PC-3 (cell line): ENCODE measurements at regions of chr3 and their contacts with region 1.

Region 1: GRCh38 chr3:55521738-55522421 is 34.8 kb upstream of the WNT5A start:
- DNase-seq: no peak
- ATAC-seq: no peak
- H3K4me3 ChIP-seq: no peak overlapping the region
- H3K27ac ChIP-seq: no peak overlapping the region
- H3K4me1 ChIP-seq: peaks cover 59% of the 10 kb centered on the region
- H3K27me3 ChIP-seq: no peaks in the 10 kb centered on the region
- CTCF ChIP-seq: no peak

Region 2: DNA sequence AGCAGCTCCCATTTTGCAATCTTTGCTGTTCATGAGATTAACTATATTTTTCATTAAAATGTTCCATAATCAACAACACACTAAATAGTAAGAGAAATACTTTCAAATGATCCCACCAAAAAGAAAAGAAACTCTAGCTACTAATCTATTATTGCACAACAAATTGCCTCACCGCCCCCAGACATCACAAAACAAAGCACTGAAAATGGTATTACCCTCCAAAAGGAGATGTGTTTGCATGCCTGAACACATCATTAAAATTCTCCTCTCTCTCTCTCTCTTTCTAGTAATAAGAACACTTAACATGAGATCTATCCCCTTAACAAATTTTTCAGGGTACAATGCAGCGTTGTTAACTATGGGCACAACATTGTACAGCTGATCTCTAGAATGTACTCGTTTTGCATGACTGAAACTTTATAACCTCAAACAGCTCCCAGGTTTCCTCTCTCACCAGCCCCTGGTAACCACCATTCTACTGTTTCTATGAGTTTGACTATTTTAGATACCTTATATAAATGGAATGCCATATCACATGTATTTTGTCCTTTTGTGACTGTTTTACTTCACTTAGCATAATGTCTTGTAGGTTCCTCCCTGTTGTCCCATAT is 67.9 kb before region 1 on chr3:
- CTCF ChIA-PET with region 1: no interaction called
- POLR2A ChIA-PET with region 1: no interaction called
- intact Hi-C with region 1: loop called (anchors 1 kb)
- DNase-seq: no peak
- ATAC-seq: no peak
- H3K4me3 ChIP-seq: no peak overlapping the region
- H3K27ac ChIP-seq: no peak overlapping the region
- H3K4me1 ChIP-seq: peaks cover 7% of the 10 kb centered on the region; the same call in 1 of the 2 replicates
- H3K27me3 ChIP-seq: no peaks in the 10 kb centered on the region
- CTCF ChIP-seq: no peak

Region 3: GRCh38 chr3:55491296-55491816 is 30.5 kb before region 1 on chr3:
- CTCF ChIA-PET with region 1: no interaction called
- POLR2A ChIA-PET with region 1: no interaction called
- intact Hi-C with region 1: loop called (anchors 1 kb)
- DNase-seq: peak; percentile 99
- ATAC-seq: peak; percentile 25
- H3K4me3 ChIP-seq: no peak overlapping the region; the same call in 1 of the 2 replicates
- H3K27ac ChIP-seq: peak overlapping the region; percentile 65
- H3K4me1 ChIP-seq: peaks cover 47% of the 10 kb centered on the region
- H3K27me3 ChIP-seq: no peaks in the 10 kb centered on the region
- CTCF ChIP-seq: no peak

Region 4: GRCh38 chr3:55543181-55543614 is 21.3 kb after region 1 on chr3:
- CTCF ChIA-PET with region 1: no interaction called
- POLR2A ChIA-PET with region 1: interaction called, 13 read pairs
- intact Hi-C with region 1: no loop called
- DNase-seq: no peak
- ATAC-seq: no peak
- H3K4me3 ChIP-seq: no peak overlapping the region
- H3K27ac ChIP-seq: no peak overlapping the region
- H3K4me1 ChIP-seq: peaks cover 5% of the 10 kb centered on the region; the same call in 1 of the 2 replicates
- H3K27me3 ChIP-seq: no peaks in the 10 kb centered on the region
- CTCF ChIP-seq: no peak

Region 5: GRCh38 chr3:55597638-55598037 is 75.8 kb after region 1 on chr3:
- CTCF ChIA-PET with region 1: no interaction called
- POLR2A ChIA-PET with region 1: no interaction called
- intact Hi-C with region 1: loop called (anchors 2 kb)
- DNase-seq: peak; percentile 91
- ATAC-seq: peak; percentile 89
- H3K4me3 ChIP-seq: no peak overlapping the region
- H3K27ac ChIP-seq: peak overlapping the region; percentile 65
- H3K4me1 ChIP-seq: peaks cover 29% of the 10 kb centered on the region
- H3K27me3 ChIP-seq: no peaks in the 10 kb centered on the region
- CTCF ChIP-seq: no peak

Region 6: GRCh38 chr3:55620351-55621025 is 98.6 kb after region 1 on chr3:
- CTCF ChIA-PET with region 1: no interaction called
- POLR2A ChIA-PET with region 1: no interaction called
- intact Hi-C with region 1: loop called (anchors 2 kb)
- DNase-seq: peak; percentile 55
- ATAC-seq: peak; percentile 42
- H3K4me3 ChIP-seq: peak overlapping the region; percentile 17; the same call in 1 of the 2 replicates
- H3K27ac ChIP-seq: peak overlapping the region; percentile 44
- H3K4me1 ChIP-seq: peaks cover 48% of the 10 kb centered on the region
- H3K27me3 ChIP-seq: no peaks in the 10 kb centered on the region
- CTCF ChIP-seq: no peak

Region 7: DNA sequence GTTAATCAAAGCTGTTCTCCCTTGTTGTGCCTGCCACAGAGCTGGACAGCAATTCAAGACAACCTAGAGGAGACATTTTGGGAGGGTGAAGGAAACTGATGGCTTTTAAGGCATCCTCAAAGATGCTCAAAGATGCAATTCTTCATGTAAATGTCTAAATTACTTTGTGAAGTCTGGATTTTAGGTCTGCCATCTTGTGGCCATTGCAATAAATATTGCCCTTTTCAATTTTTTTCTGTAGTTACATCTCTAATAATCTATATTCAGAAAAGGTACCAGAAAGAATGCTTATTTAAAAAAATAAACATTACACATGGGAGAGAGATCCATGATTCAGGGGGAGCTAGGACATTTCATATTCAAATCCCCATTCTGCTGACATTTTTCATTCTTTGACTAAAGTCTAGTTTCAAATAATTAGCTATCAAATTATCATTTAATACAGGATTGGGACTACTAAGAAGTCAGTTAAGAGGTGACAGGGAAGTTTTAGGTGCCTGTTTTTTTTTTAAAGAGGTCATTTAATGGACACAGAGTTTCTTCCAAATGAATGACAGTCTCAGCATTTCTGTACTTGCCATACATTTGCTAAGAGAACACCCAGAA is 225.0 kb after region 1 on chr3:
- CTCF ChIA-PET with region 1: no interaction called
- POLR2A ChIA-PET with region 1: no interaction called
- intact Hi-C with region 1: loop called (anchors 1 kb)
- DNase-seq: peak; percentile 48
- ATAC-seq: no peak
- H3K4me3 ChIP-seq: no peak overlapping the region
- H3K27ac ChIP-seq: no peak overlapping the region
- H3K4me1 ChIP-seq: peaks cover 17% of the 10 kb centered on the region
- H3K27me3 ChIP-seq: no peaks in the 10 kb centered on the region
- CTCF ChIP-seq: peak; percentile 71